ENCODE measurements at regions of chr21 and their contacts with region 1.

Region 1: DNA sequence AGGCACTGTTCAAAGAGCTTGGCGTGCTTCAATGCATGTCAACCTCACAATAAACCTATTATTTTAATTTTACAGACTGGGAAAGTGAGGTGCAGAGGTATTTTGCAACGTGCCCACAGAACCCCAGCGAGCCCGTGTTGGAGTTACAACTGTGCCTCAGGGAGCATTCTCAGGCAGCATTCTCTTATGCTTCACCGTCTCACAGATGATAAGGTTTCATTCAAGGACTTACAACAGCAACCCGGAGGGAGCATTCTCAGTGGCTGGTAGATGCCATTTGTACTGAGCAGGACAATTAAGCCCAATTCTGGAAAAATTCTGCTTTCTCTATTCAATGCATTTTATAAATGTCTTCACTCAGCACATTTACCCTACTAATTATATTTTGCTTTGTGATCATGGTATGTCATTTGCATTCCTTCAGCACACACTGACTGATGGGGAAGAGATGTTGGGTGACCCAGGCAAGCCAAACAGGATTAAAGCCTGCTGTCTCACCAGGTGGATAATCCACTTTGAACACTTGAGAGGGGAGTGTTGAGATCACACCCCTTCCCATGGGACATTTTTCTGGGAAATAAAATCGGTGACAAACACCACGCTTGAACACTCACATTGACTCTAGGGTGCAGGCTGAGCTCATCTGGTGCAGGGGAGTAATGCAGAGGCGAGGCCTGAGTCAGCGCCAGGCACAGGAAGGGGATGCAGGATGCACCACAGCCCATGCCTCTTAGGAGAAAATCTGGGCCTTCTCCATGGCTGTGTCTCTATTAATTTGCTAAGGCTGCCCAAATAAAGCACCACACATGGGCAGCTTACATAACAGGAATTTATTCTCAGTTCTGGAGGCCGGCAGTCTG is 113.9 kb downstream of the CLIC6 start:
- DNase-seq: no peak
- H3K4me3 ChIP-seq: no peak overlapping the region
- H3K27me3 ChIP-seq: no peaks in the 10 kb centered on the region
- CTCF ChIP-seq: no peak

Region 2: DNA sequence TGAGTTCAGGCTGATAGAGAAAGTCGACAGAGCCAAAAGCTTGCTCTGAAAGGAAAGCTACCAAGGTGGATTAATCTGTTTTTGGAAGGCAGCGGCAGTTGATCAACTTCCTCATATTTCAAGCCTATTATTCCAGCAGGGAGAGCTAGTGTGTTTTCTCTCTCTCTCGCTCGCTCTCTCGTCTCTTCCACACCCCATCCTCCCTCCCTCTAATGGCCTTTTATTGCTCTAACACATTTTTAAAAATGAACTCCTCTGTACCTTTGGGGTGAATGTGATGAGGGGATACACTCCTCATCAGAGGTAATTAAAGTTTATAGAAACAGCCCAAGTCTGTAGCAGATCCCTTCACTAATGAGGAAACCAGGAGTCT is 12.4 kb after region 1 on chr21:
- CTCF ChIA-PET with region 1: interaction called, 11 read pairs
- POLR2A ChIA-PET with region 1: no interaction called
- DNase-seq: no peak
- H3K4me3 ChIP-seq: no peak overlapping the region
- H3K27me3 ChIP-seq: no peaks in the 10 kb centered on the region
- CTCF ChIP-seq: no peak

Region 3: DNA sequence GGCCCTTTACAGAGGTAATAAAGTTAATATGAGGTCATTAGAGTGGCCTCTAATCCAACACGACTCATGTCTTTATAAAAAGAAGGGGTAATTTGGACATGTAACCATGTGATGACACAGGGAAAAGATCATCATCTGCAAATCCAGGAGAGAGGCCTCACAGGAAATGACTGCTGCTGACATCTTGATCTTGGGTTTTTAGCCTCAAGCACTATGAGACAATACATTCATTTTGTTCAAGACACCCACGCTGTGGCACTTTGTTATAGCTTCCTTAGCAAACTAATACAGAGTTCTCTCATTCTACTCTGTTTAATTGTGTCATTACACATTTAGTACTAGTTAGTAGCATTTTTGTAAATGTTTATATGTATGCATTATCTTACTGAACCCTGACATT is 330.3 kb after region 1 on chr21:
- CTCF ChIA-PET with region 1: no interaction called
- POLR2A ChIA-PET with region 1: no interaction called
- DNase-seq: no peak
- H3K4me3 ChIP-seq: no peak overlapping the region
- H3K27me3 ChIP-seq: no peaks in the 10 kb centered on the region
- CTCF ChIP-seq: no peak

Measured in BJ (cell line).